Activated CD4-positive, alpha-beta memory T cell treated with anti-CD3 and anti-CD28 coated beads for 36 hours (primary cell): ENCODE measurements at regions of chr18 and their contacts with region 1.

Region 1: GRCh38 chr18:3585656-3586509 is 135.9 kb downstream of the TGIF1 start:
- DNase-seq: peak; percentile 86
- H3K4me3 Mint-ChIP-seq: no peak overlapping the region
- H3K27ac Mint-ChIP-seq: peak overlapping the region; percentile 69
- H3K4me1 Mint-ChIP-seq: peaks cover 45% of the 10 kb centered on the region
- H3K27me3 Mint-ChIP-seq: no peaks in the 10 kb centered on the region

Region 2: DNA sequence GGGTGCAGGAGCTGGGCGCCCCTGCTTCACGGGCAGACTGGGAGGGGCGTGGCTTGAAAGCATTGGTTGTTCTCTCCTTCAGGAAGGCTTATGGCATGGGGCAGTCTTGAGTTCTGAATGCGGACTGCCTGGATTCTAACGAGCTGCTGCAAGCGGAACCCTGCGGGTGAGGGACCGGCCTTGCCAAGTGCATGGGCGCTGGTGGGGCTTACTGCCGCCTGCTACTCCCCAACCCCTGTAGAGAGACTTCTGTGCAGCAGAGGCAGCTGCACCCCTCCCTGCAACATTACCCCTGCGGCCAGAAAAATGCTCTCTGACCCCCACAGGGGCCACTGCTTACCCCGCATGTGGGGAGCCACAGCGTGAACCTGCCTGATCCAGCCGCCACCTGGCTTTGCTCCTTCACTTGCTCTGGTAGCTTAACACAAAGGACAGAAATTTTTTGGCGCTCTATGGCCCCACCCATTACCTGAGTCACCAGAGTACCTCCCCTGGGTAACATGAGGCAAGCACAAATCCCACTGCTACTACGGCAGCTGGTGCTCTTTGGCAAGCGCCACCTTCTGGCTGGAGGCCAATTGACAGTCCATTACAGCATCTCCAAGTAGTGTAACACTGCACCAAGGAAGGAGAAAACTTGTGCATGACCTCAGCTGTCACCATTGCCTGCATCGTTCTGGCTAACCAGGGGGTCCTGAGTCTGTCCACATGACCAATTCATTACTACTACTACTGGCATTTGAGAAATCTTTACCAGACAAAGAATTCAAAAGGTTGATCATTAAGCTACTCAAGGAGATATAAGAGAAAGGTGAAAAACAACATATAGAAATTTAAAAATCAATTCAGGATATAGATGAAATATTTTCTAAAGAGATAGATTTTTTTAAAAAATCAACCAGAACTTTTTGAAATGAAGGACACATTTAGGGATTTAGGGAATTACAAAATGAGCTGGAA is 288.6 kb before region 1 on chr18:
- CTCF ChIA-PET with region 1: interaction called, 11 read pairs
- POLR2A ChIA-PET with region 1: interaction called, 3 read pairs
- intact Hi-C with region 1: no loop called
- DNase-seq: peak; percentile 97
- H3K4me3 Mint-ChIP-seq: peak overlapping the region; percentile 87
- H3K27ac Mint-ChIP-seq: peak overlapping the region; percentile 52
- H3K4me1 Mint-ChIP-seq: peaks cover 8% of the 10 kb centered on the region
- H3K27me3 Mint-ChIP-seq: peaks cover 17% of the 10 kb centered on the region

Region 3: DNA sequence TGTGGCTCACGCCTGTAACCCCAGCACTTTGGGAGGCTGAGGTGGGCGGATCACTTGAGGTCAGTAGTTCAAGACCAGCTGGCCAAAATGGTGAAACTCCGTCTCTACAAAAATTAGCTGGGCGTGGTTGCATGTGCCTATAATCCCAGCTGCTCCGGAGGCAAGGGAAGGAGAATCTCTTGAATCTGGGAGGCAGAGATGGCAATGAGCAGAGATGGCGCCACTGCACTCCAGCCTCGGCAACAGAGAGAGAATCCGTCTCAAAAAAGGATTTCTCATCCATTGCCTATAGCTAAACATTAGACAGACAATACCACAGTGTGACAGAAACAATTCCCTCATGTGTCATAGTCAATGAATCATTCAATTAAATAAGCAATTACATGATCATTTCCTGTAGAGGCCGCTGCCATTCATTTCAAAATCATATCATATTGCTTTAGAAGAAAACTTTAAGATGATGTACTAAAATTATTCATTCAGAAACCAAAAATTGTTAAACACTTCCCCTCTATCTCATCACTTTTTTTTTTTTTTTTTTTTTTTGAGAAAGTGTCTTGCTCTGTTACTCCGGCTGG is 205.4 kb before region 1 on chr18:
- CTCF ChIA-PET with region 1: interaction called, 30 read pairs
- POLR2A ChIA-PET with region 1: no interaction called
- intact Hi-C with region 1: loop called (anchors 1 kb)
- DNase-seq: peak; percentile 57
- H3K4me3 Mint-ChIP-seq: no peak overlapping the region
- H3K27ac Mint-ChIP-seq: no peak overlapping the region
- H3K4me1 Mint-ChIP-seq: peaks cover 9% of the 10 kb centered on the region
- H3K27me3 Mint-ChIP-seq: peaks cover 13% of the 10 kb centered on the region

Region 4: DNA sequence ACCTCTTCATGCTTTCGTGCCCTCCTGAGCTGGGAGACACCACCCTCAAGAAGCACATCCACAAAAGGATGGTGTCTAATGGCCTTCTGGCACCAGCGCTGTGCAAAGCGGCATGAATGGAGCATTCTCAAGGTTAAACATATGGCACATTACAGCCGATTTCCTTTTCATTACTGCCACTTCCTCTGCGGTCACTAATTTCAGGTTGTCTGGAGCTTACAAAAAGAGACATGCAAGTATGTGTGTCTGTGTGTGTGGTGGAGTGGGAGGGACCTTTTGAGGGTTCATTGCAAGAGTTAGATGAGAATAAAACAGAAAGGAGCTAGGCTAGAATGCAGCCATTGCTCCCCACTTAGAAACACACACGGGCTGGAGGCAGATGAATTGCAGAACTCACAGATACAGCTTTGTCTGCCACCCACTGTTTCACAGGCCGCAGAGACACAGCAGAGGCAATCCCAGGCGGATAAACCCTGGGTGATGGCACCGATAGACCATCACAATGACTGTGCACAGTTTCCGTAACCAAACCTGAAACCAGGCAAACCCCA is 59.9 kb before region 1 on chr18:
- CTCF ChIA-PET with region 1: interaction called, 10 read pairs
- POLR2A ChIA-PET with region 1: no interaction called
- intact Hi-C with region 1: no loop called
- DNase-seq: peak; percentile 71
- H3K4me3 Mint-ChIP-seq: peak overlapping the region; percentile 11
- H3K27ac Mint-ChIP-seq: peak overlapping the region; percentile 8
- H3K4me1 Mint-ChIP-seq: peaks cover 17% of the 10 kb centered on the region
- H3K27me3 Mint-ChIP-seq: no peaks in the 10 kb centered on the region

Region 5: DNA sequence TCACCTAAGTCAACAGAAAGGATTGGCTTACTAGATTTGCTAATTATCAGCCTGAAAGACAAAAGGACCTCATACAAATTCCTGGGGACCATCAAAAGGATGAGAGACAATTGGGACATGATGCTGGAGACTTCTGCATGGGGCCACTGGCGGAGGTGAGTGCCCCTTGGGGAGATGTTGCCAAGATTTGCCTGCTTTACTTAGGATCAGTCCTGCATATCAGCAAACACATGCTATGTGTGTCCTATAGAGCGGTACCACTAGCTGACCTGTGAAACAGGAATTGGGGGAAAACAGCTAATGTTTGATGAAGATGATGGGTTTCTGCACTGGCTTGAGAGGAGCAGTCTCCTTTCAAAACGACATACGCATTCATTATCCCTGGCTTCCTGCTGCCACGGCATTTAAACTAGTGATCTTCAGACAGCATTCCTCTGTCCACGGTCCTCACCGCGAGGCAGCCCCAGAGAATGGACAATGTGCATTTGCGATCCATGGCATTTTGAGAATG is 31.7 kb before region 1 on chr18:
- CTCF ChIA-PET with region 1: no interaction called
- POLR2A ChIA-PET with region 1: no interaction called
- intact Hi-C with region 1: no loop called
- DNase-seq: no peak
- H3K4me3 Mint-ChIP-seq: no peak overlapping the region
- H3K27ac Mint-ChIP-seq: no peak overlapping the region
- H3K4me1 Mint-ChIP-seq: no peaks in the 10 kb centered on the region
- H3K27me3 Mint-ChIP-seq: no peaks in the 10 kb centered on the region

Region 6: DNA sequence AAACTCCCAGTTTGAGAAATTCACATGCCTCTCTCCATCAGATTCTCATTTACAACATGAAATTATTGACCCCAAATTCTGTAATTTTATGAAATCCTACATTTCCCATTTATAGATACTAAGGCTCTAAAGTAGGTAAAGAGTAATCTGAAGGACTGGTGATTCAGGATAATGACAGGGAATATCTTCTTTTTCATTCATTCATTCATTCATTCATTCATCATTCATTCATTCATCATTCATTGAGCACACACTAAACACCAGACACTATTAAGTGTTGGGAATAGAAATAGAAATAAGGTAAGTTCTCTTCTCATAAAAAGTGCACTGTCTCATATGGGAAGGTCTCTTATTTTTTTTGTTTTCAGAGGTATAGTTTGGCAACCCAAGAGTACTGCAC is 19.0 kb before region 1 on chr18:
- CTCF ChIA-PET with region 1: no interaction called
- POLR2A ChIA-PET with region 1: no interaction called
- intact Hi-C with region 1: no loop called
- DNase-seq: no peak
- H3K4me3 Mint-ChIP-seq: no peak overlapping the region
- H3K27ac Mint-ChIP-seq: no peak overlapping the region
- H3K4me1 Mint-ChIP-seq: no peaks in the 10 kb centered on the region
- H3K27me3 Mint-ChIP-seq: no peaks in the 10 kb centered on the region